GM23248 (cell line): ENCODE measurements at regions of chr13 and their contacts with region 1.

Region 1: GRCh38 chr13:57212989-57213388 is 46.0 kb downstream of the PRR20E start:
- DNase-seq: no peak
- H3K4me3 ChIP-seq: no peak overlapping the region
- H3K27ac ChIP-seq: no peak overlapping the region
- H3K4me1 ChIP-seq: no peaks in the 10 kb centered on the region
- H3K27me3 ChIP-seq: no peaks in the 10 kb centered on the region

Region 2: DNA sequence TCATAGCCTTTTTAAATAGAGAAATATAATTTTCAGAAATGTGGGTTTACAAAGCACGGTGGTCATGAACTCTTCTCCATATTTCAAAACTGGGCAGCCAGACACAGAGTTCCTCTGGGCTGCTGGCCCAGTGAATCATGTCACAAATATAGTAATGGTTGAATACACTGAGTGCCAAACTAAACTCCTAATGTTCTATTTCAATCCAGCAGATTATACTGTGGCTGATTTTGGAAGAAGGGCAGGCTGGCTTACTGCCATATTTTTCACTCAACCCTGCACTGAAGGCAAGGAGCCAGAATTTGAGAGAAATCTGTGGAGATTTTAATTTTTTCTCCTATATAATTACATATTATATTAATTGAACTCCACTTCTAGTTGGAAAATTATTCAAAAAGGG is 89.3 kb before region 1 on chr13:
- in situ Hi-C with region 1: loop called (anchors 25 kb)
- DNase-seq: no peak
- H3K4me3 ChIP-seq: no peak overlapping the region
- H3K27ac ChIP-seq: no peak overlapping the region
- H3K4me1 ChIP-seq: no peaks in the 10 kb centered on the region
- H3K27me3 ChIP-seq: no peaks in the 10 kb centered on the region

Region 3: DNA sequence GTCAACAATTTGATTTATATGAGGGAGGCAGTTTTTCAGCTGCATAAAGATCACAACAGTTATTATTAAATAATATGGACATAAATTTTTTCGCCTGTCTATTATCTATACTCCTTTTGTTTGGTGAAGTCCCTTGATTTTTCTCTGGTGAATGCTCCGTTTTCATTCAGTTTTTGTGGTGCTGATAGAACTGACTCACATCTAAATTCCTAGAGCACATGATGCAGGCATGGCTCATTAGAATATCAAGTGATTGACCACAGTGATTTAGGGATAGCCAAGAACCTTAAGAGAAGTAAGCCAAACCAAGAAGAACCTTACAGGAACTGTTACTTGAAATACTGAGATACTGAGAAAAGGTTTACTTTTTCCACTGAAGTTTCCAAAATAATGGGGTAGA is 162.9 kb after region 1 on chr13:
- in situ Hi-C with region 1: no loop called
- DNase-seq: no peak
- H3K4me3 ChIP-seq: no peak overlapping the region
- H3K27ac ChIP-seq: no peak overlapping the region
- H3K4me1 ChIP-seq: no peaks in the 10 kb centered on the region
- H3K27me3 ChIP-seq: no peaks in the 10 kb centered on the region